ENCODE measurements at regions of chr6 and their contacts with region 1.

Region 1: DNA sequence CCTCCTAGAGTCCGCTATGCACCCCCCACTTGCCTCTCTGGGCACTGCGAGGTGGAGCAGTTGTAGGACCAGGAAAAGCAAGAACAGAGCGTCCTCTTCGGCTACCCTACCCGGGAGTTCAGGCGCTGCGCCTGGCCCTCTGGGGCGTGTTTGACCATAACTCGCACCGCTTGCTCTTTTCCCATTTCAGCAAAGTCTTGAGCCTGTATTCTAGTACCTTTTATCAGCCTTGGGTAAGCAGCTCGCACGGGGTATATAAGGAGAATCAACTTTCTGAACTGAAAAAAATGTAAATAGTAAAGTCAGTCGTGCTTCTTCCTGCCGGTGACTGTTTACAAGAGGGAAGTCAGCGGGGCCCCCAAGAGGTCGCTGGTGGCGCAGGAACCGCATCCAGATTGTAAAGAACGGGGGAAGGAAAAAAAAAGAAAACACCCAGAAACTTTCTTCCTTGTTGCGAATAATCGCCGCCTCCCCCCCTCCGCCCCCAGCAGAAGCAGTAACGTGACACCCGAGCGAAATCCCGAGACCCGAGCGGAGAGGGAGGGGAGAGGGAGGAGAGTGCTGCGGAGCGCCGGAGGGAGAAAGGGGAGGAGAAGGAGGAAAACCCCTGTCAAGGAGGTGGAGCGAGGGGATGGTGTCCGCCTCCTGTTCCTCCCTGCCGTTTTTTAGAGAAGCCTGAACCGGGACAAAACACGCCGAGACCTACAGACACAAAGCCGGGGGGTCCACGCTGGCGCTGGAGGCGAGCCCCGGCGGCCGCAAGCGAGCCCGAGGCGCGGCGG is at the start of gene UST:
- DNase-seq: peak; percentile 80 to 87 (median 83)
- ATAC-seq: peak; percentile 89 to 92 (median 90)
- H3K4me3 ChIP-seq: peak within 1 kb of the TSS; percentile 51 to 91 (median 74)
- H3K27ac ChIP-seq: peak within 1 kb of the TSS; percentile 58 to 87 (median 82)
- H3K4me1 ChIP-seq: peaks cover 0 to 24% (median 8%) of the 10 kb centered on the region in 12 donors
- H3K27me3 ChIP-seq: peaks cover 0 to 17% (median 0%) of the 10 kb centered on the region in 9 donors
- CTCF ChIP-seq: peak in 9 of 12 donors; percentile 20 to 60 (median 43)
- POLR2A ChIP-seq: peak in 1 of 2 donors; percentile 44
- total RNA-seq, gene UST: 1.5 to 4.5 (median 2.7) TPM

Region 2: GRCh38 chr6:148578245-148578732 is 168.3 kb before region 1 on chr6:
- intact Hi-C with region 1: loop called in 4 of 10 experiments (anchors 5 to 10 kb)
- DNase-seq: peak; percentile 73 to 87 (median 84)
- ATAC-seq: peak; percentile 96 to 100 (median 100)
- H3K4me3 ChIP-seq: no peak overlapping the region
- H3K27ac ChIP-seq: no peak overlapping the region
- H3K4me1 ChIP-seq: peaks cover 0 to 5% (median 0%) of the 10 kb centered on the region in 12 donors
- H3K27me3 ChIP-seq: peaks cover 0 to 5% (median 0%) of the 10 kb centered on the region in 9 donors
- CTCF ChIP-seq: peak; percentile 55 to 95 (median 78)
- POLR2A ChIP-seq: no peak

Region 3: DNA sequence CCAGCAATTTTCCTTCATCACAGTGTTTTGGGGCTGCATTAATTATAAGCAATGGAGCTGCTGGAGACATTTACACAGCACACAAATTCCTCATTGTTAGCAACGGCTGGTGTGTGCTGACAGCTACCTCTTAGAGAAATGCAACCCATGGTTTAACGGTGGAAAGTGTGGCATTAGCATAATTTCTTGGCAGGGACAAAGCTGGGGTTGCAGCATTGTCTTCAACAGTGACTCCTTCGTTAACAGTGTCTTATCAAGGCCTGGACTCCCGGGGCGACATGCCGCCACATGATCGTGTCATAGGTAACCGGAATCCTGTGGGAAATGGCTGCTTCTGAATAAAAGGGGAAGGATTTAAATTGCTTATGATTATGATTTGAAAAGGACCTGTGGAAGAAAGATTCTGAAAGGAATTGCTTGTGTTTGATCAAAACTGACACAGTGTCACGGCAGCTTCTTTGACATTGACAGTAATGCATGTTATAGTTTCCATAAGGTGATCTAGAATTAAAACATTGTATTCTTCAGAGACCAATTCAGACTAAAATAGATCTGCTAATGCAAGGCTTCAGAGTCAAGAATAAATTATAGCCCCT is 128.2 kb after region 1 on chr6:
- intact Hi-C with region 1: loop called in 1 of 10 experiments (anchors 10 kb)
- DNase-seq: peak in 4 of 5 donors; percentile 10 to 58 (median 42)
- ATAC-seq: peak; percentile 86 to 96 (median 90)
- H3K4me3 ChIP-seq: peak overlapping the region in 3 of 12 donors; percentile 12 to 20 (median 12)
- H3K27ac ChIP-seq: peak overlapping the region in 2 of 12 donors; percentile 17 to 36
- H3K4me1 ChIP-seq: peaks cover 0 to 13% (median 1%) of the 10 kb centered on the region in 12 donors
- H3K27me3 ChIP-seq: no peaks in the 10 kb centered on the region
- CTCF ChIP-seq: no peak
- POLR2A ChIP-seq: no peak

Measured in heart left ventricle (tissue), 16 donors.